BJ (cell line): ENCODE measurements at regions of chr19 and their contacts with region 1.

Region 1: GRCh38 chr19:45478454-45479238 is 10.8 kb downstream of the FOSB start:
- DNase-seq: no peak
- H3K4me3 ChIP-seq: peak overlapping the region; percentile 53
- H3K27me3 ChIP-seq: no peaks in the 10 kb centered on the region
- CTCF ChIP-seq: peak; percentile 93

Region 2: GRCh38 chr19:45404557-45405434 is 73.8 kb before region 1 on chr19 and contains the start of gene PPP1R13L:
- CTCF ChIA-PET with region 1: interaction called, 18 read pairs
- POLR2A ChIA-PET with region 1: no interaction called
- DNase-seq: no peak
- H3K4me3 ChIP-seq: peak within 1 kb of the TSS; percentile 92
- H3K27me3 ChIP-seq: no peaks in the 10 kb centered on the region
- CTCF ChIP-seq: no peak
- polyA plus RNA-seq, gene PPP1R13L: 5.4 and 12.3 TPM in 2 replicates

Region 3: DNA sequence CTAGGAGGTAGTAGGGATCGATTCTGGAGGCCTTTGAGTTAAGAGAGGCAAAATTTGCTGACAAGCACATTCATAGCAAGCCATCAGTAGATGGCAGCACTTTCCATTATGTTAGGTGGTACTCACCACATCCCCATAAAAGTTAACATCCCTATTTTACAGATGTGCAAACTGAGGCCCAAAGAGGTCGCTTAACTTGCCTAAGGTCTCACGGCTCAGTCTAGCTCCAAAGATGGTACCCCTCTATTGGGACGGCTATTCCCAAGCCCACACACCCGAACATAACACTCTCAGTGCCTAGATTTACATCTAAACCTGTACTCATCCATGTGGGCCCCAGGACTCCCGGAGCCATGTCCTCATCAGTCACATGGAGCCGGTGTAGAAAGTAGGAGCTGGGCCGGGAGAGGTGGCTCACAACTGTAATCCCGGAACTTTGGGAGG is 32.3 kb before region 1 on chr19:
- CTCF ChIA-PET with region 1: interaction called, 764 read pairs
- POLR2A ChIA-PET with region 1: no interaction called
- DNase-seq: no peak
- H3K4me3 ChIP-seq: no peak overlapping the region
- H3K27me3 ChIP-seq: no peaks in the 10 kb centered on the region
- CTCF ChIP-seq: peak; percentile 46

Region 4: DNA sequence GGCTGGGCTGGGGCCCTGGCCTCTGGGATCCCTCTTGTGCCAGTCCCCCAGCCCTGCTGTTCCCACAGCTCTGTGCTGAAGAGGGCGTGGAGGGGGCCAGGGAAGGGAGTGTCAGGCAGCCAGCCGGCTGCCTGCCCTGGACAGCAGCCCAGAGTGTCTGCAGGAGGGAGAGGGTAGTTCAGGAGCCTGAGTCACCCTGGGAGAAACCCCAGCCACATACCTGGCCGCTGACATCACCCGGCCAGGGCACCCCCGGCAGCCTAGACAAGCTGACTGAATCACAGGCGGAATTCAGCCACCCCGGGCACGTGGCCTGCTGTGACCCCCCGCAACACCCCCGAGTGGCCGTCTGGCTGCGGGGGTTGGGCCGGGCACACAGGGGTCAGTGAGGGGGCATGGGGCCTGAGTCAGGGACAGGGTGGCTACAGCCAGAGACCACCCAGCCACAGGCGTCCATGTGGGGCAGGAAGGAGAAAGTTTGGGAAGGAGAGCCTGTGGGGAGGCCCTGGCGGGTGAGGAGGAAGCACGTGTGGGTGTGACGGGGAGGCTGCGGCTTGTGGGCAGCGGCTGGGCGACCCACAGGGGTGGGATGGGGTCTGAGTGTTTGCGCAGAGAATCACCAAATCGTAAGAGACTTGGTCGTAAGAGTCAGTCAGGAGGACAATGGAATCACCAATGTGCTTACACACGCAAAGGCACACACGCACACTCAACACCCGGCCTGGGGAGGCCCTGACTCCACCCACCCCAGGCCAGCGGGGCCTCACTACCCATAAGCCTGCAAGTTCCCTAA is 22.7 kb before region 1 on chr19:
- CTCF ChIA-PET with region 1: interaction called, 17 read pairs
- POLR2A ChIA-PET with region 1: no interaction called
- DNase-seq: peak; percentile 99
- H3K4me3 ChIP-seq: 0 out of 2 replicates have a peak overlapping the region, but pooled peaks have one; percentile 2
- H3K27me3 ChIP-seq: no peaks in the 10 kb centered on the region
- CTCF ChIP-seq: no peak

Region 5: GRCh38 chr19:45515081-45515624 is 36.5 kb after region 1 on chr19:
- CTCF ChIA-PET with region 1: no interaction called
- POLR2A ChIA-PET with region 1: no interaction called
- DNase-seq: no peak
- H3K4me3 ChIP-seq: no peak overlapping the region
- H3K27me3 ChIP-seq: no peaks in the 10 kb centered on the region
- CTCF ChIP-seq: no peak